SK-N-SH (cell line): ENCODE measurements at regions of chr1 and their contacts with region 1.

Region 1: DNA sequence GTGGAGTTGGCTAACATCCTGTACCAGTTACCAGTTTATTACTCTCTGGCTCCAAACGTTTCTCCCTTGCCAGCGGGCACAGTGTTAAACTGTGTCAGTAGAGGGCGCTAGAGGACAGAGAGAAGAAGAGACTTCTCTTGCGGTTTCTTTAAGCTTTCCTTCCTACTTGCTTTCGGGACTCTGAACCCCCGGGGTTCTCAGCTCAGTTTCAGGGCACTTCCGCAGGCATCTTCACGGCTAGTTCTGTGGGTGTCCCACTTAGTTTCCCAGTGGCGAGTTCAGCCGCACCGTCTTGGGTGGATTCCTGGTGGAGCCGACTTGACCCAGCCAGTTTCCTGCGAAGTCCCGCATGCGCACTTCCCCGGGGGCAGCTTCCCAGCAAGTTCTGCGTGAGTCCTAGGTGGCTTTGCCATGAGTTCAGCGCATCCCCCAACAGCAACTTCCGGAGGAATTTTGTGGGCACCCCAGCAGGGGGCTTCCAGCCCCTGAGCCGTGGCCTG is 37.9 kb upstream of the BTG2 start:
- DNase-seq: peak; percentile 80
- H3K4me3 ChIP-seq: peak overlapping the region; percentile 65
- H3K27ac ChIP-seq: peak overlapping the region in 1 of 2 experiments; percentile 75; a peak in 1 of 4 replicates
- H3K4me1 ChIP-seq: peaks cover 0 to 15% of the 10 kb centered on the region in 2 experiments; a peak in 1 of 4 replicates
- H3K27me3 ChIP-seq: no peaks in the 10 kb centered on the region; the same call in 1 of the 2 replicates
- CTCF ChIP-seq: peak; percentile 95
- EP300 ChIP-seq: no peak
- RAD21 ChIP-seq: peak; percentile 79

Region 2: GRCh38 chr1:203038891-203039608 is 228.3 kb before region 1 on chr1:
- CTCF ChIA-PET with region 1: interaction called, 228 read pairs
- POLR2A ChIA-PET with region 1: no interaction called
- DNase-seq: peak; percentile 84
- H3K4me3 ChIP-seq: no peak overlapping the region; a peak in 1 of 4 replicates
- H3K27ac ChIP-seq: peak overlapping the region in 1 of 2 experiments; percentile 50; a peak in 1 of 4 replicates
- H3K4me1 ChIP-seq: peaks cover 20 to 42% of the 10 kb centered on the region in 2 experiments; a peak in 3 of 4 replicates
- H3K27me3 ChIP-seq: no peaks in the 10 kb centered on the region
- CTCF ChIP-seq: peak; percentile 97
- EP300 ChIP-seq: no peak
- RAD21 ChIP-seq: peak; percentile 93

Region 3: GRCh38 chr1:203148125-203148524 is 119.3 kb before region 1 on chr1:
- CTCF ChIA-PET with region 1: interaction called, 12 read pairs
- POLR2A ChIA-PET with region 1: no interaction called
- DNase-seq: no peak
- H3K4me3 ChIP-seq: no peak overlapping the region
- H3K27ac ChIP-seq: no peak overlapping the region
- H3K4me1 ChIP-seq: peaks cover 18 to 48% of the 10 kb centered on the region in 2 experiments; a peak in 3 of 4 replicates
- H3K27me3 ChIP-seq: no peaks in the 10 kb centered on the region
- CTCF ChIP-seq: peak; percentile 51
- EP300 ChIP-seq: no peak
- RAD21 ChIP-seq: no peak

Region 4: DNA sequence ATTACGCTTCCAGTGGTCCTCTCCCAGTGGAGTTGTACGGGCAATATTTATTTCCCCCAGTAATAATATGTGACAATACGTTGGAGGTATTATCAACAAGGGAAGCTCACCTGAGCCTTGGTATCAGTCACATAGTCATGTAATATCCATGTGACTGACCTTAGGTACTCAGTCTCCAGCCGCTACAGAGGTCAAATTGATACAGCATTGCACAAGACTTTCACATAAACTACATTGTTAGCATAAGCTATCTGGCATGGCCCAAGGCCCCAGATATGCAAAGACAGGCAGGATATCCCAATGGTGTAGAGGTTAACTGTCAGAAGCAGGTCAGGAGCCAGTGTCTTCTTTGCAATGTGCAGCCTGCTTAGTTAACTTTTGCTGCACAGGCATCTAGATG is 22.6 kb before region 1 on chr1:
- CTCF ChIA-PET with region 1: interaction called, 32 read pairs
- POLR2A ChIA-PET with region 1: no interaction called
- DNase-seq: no peak
- H3K4me3 ChIP-seq: no peak overlapping the region
- H3K27ac ChIP-seq: no peak overlapping the region
- H3K4me1 ChIP-seq: no peaks in the 10 kb centered on the region
- H3K27me3 ChIP-seq: no peaks in the 10 kb centered on the region
- CTCF ChIP-seq: no peak
- EP300 ChIP-seq: no peak
- RAD21 ChIP-seq: no peak

Region 5: DNA sequence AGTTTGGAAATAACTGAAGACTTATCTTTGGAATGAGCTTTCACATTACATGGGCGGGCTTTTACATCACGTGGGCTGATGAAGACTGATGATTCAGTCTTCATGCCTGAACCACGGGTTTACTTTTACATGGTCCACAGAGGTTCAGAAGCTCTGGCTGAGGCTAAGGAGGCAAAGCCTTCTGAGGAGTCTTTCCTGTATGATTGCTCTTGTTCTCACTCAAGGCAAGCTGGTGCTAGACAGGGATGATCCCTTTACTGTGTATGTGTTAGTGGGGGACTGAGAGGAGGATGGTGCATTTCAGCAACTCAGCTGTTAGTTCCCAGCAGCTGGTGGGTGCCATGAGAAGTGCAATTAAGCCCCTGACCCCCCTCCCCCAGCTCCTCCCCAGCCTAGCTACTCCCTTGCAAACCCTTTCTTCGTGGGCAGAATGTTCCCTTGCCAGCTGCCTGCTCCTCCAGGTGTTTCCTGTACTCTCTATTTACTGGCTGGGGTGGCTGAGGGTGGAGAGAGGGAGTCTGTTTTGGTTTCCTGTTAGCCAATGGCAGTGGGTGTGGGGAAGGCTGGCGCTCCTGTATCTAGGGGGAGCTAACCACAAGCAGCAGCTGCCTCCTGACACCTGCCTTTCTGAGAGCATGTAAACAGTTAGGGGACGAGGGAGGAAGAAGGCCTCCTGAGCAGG is 53.3 kb after region 1 on chr1:
- CTCF ChIA-PET with region 1: interaction called, 61 read pairs
- POLR2A ChIA-PET with region 1: no interaction called
- DNase-seq: no peak
- H3K4me3 ChIP-seq: no peak overlapping the region
- H3K27ac ChIP-seq: no peak overlapping the region
- H3K4me1 ChIP-seq: peaks cover 3 to 39% of the 10 kb centered on the region in 2 experiments; a peak in 1 of 4 replicates
- H3K27me3 ChIP-seq: peaks cover 26% of the 10 kb centered on the region
- CTCF ChIP-seq: no peak
- EP300 ChIP-seq: no peak
- RAD21 ChIP-seq: no peak

Region 6: DNA sequence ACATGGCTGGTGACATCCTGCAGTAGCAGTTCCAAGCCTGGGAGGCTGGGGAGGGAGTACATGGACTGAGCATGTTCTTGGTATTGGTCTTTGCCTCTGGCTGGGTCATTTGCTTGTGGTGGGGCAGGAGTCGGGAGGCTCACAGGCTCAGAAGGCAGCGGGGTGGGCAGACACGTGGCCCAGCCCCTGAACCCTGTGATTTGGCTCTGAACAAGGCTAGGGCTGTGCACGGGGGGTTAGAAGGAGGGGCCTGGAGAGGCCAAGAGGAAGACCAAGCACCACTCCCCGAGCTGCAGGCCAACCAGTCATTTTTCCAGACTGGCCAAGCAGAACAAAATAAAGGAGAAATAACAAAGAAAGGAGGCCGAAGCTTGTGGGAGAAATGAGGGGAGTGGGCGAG is 198.6 kb after region 1 on chr1:
- CTCF ChIA-PET with region 1: interaction called, 14 read pairs
- POLR2A ChIA-PET with region 1: no interaction called
- DNase-seq: no peak
- H3K4me3 ChIP-seq: no peak overlapping the region
- H3K27ac ChIP-seq: no peak overlapping the region
- H3K4me1 ChIP-seq: peaks cover 3 to 8% of the 10 kb centered on the region in 2 experiments; a peak in 2 of 4 replicates
- H3K27me3 ChIP-seq: no peaks in the 10 kb centered on the region
- CTCF ChIP-seq: no peak
- EP300 ChIP-seq: no peak
- RAD21 ChIP-seq: no peak

Region 7: DNA sequence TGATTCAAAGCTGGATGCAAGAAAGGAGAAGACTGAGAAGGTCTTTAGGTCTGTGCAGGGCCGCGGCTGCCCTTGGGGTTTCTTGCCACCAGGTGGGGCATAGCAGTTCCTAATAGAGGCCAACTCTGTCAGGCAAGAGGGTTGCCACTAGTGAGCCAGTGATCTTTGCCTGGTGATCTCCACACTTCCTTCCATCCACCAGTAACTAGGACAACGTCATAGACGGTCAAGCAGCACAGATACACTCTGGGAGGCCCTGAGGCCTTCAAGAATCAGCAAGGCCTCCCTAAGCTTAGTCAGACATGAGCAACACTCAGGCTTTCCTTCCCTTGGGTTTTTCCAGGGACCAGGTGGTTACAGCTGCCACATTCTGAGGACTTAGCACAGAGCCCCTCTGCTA is 326.3 kb after region 1 on chr1:
- CTCF ChIA-PET with region 1: no interaction called
- POLR2A ChIA-PET with region 1: no interaction called
- DNase-seq: no peak
- H3K4me3 ChIP-seq: no peak overlapping the region
- H3K27ac ChIP-seq: no peak overlapping the region
- H3K4me1 ChIP-seq: peaks cover 0 to 6% of the 10 kb centered on the region in 2 experiments; a peak in 1 of 4 replicates
- H3K27me3 ChIP-seq: no peaks in the 10 kb centered on the region
- CTCF ChIP-seq: peak; percentile 32; the same call in 1 of the 2 replicates
- EP300 ChIP-seq: no peak
- RAD21 ChIP-seq: no peak

Region 8: GRCh38 chr1:203702130-203702577 is 434.8 kb after region 1 on chr1:
- CTCF ChIA-PET with region 1: interaction called, 20 read pairs
- POLR2A ChIA-PET with region 1: no interaction called
- DNase-seq: peak; percentile 74
- H3K4me3 ChIP-seq: no peak overlapping the region
- H3K27ac ChIP-seq: peak overlapping the region in 1 of 2 experiments; percentile 47; a peak in 1 of 4 replicates
- H3K4me1 ChIP-seq: no peaks in the 10 kb centered on the region
- H3K27me3 ChIP-seq: no peaks in the 10 kb centered on the region
- CTCF ChIP-seq: peak; percentile 91
- EP300 ChIP-seq: no peak
- RAD21 ChIP-seq: peak; percentile 98